ENCODE measurements at regions of chr6 and their contacts with region 1.

Region 1: GRCh38 chr6:114886670-114887436 is 544.0 kb upstream of the HS3ST5 start:
- DNase-seq: no peak
- H3K4me3 ChIP-seq: no peak overlapping the region
- H3K4me3 Mint-ChIP-seq: no peak overlapping the region
- H3K27ac Mint-ChIP-seq: no peak overlapping the region
- H3K4me1 ChIP-seq: no peaks in the 10 kb centered on the region
- H3K4me1 Mint-ChIP-seq: no peaks in the 10 kb centered on the region
- H3K27me3 ChIP-seq: no peaks in the 10 kb centered on the region
- H3K27me3 Mint-ChIP-seq: no peaks in the 10 kb centered on the region
- CTCF ChIP-seq: no peak

Region 2: GRCh38 chr6:115485400-115485799 is 598.5 kb after region 1 on chr6:
- CTCF ChIA-PET with region 1: no interaction called
- POLR2A ChIA-PET with region 1: no interaction called
- intact Hi-C with region 1: loop called (anchors 5 kb)
- DNase-seq: no peak
- H3K4me3 ChIP-seq: no peak overlapping the region
- H3K4me3 Mint-ChIP-seq: no peak overlapping the region
- H3K27ac Mint-ChIP-seq: no peak overlapping the region
- H3K4me1 ChIP-seq: no peaks in the 10 kb centered on the region
- H3K4me1 Mint-ChIP-seq: no peaks in the 10 kb centered on the region
- H3K27me3 ChIP-seq: no peaks in the 10 kb centered on the region
- H3K27me3 Mint-ChIP-seq: peaks cover 7% of the 10 kb centered on the region
- CTCF ChIP-seq: no peak